Left ventricle myocardium inferior (tissue), 1 donor: ENCODE measurements at regions of chr4 and their contacts with region 1.

Region 1: GRCh38 chr4:37891260-37892159 is 626 bp downstream of the TBC1D1 start:
- DNase-seq: peak; percentile 37
- H3K4me3 ChIP-seq: peak overlapping the region; percentile 97
- H3K27ac ChIP-seq: peak overlapping the region; percentile 94
- H3K4me1 ChIP-seq: peaks cover 53% of the 10 kb centered on the region
- H3K27me3 ChIP-seq: no peaks in the 10 kb centered on the region
- CTCF ChIP-seq: no peak

Region 2: DNA sequence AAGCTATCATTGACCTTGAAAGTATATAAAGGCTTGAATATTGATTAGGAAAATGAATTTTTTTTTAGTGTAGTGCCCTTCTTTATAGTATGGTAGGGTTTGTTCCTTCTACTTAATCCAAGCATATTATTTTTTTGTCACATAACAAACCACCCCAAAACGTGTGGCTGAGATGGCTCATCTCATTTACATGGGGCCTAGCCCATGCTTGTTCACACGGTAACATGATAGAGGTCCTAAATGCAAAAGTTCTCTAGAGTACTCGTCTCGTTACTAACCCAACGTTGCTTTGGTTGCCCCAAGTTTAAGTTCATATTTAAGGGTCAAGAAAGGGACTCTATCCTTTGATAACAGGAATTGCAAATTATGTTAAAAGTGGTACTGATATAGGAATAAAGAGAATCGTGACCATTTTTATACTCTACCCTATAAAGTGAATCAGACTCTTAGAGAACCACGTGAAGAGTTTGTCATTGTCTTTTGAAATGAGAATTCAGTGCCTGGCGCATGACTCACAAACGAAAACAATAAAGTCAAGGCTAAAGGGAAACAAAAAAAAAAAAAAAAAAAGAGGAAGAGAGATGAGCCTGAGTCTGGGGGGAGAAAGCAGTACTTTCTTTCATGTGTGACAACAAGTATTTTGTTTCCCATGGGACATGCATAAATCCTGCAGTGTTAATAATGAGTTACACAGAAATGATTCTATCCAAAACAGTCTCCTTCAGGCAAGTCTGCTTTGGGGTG is 1049.8 kb before region 1 on chr4:
- intact Hi-C with region 1: no loop called
- DNase-seq: no peak
- H3K4me3 ChIP-seq: no peak overlapping the region
- H3K27ac ChIP-seq: no peak overlapping the region
- H3K4me1 ChIP-seq: no peaks in the 10 kb centered on the region
- H3K27me3 ChIP-seq: no peaks in the 10 kb centered on the region
- CTCF ChIP-seq: no peak

Region 3: DNA sequence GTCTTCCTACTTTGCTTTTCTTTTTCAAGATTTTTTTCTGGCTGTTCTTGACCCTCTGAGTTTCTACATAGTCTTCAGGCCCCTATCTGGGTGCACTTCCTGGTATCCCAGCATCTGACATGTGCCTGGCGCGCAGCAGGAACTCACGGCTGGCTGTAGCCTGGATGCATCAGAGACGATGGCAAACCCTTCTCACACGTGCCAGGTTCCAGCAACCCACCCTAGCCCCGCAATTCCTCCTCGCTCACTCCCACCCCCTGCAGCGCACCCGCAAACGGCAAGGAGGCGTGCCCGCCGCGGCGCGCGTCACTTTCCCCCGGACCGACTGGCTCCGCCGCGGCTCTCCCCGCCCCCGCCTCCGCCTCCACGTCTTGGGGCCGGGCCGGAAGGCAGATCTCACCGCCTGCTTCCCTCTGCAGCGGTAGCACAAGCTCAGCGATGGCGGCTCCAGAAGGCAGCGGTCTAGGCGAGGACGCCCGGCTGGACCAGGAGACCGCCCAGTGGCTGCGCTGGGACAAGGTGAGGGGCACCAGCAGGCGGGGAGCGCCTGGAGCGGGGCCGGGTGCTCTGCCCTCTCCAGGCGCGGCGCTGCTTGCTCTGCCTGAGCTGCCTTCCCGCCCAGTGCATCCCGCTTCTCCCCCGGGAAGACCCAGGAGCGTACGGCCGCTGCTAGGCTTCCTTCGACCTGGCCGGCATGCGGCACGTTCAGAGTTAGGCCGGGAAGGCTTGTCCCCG is 65.0 kb before region 1 on chr4 and contains the start of gene PGM2:
- intact Hi-C with region 1: loop called (anchors 10 kb)
- DNase-seq: peak; percentile 93
- H3K4me3 ChIP-seq: peak within 1 kb of the TSS; percentile 91
- H3K27ac ChIP-seq: peak within 1 kb of the TSS; percentile 92
- H3K4me1 ChIP-seq: peaks cover 69% of the 10 kb centered on the region
- H3K27me3 ChIP-seq: no peaks in the 10 kb centered on the region
- CTCF ChIP-seq: no peak
- total RNA-seq, gene PGM2: 11.5 TPM

Region 4: DNA sequence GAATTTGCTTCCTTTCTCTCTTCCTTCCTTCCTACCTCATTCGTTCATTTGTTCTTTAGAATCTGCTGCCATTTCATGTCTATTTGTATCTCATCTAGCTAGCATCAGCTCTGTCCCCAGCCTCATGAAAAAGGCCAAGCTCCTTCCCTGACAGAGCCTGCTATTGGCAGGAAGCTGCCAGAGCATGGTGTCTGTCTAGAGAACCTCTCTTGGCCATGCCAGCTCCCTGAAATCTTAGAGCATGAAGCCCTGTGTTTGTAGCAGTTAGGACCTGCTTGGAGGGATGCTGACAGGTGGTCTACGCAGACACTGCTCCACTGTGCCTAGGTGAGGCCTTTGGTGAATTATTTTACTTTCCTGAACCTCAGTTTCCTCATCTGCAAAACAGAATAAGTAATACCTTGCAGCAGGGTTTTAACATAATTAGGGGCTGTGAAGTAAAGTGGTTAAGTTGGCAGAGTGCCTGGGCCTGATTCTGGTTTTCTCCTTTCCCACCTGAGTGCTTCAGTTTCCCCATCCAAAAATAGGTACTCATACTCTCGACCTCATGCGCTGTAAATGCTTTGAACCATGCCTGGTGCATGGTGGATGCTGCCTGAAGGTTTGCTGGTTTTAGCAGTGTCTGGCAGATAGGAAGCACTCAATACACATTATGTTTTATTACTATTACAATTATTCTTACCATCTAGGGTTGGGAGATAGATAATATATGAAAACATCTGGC is 73.4 kb after region 1 on chr4:
- intact Hi-C with region 1: loop called (anchors 10 kb)
- DNase-seq: no peak
- H3K4me3 ChIP-seq: no peak overlapping the region
- H3K27ac ChIP-seq: no peak overlapping the region
- H3K4me1 ChIP-seq: peaks cover 34% of the 10 kb centered on the region
- H3K27me3 ChIP-seq: no peaks in the 10 kb centered on the region
- CTCF ChIP-seq: no peak